Gastrocnemius medialis (tissue), 4 donors: ENCODE measurements at regions of chr2 and their contacts with region 1.

Region 1: GRCh38 chr2:98835831-98836385 is 100.1 kb downstream of the CRACDL start:
- DNase-seq: no peak
- ATAC-seq: no peak
- H3K4me3 ChIP-seq: no peak overlapping the region
- H3K27ac ChIP-seq: no peak overlapping the region
- H3K4me1 ChIP-seq: no peaks in the 10 kb centered on the region
- H3K27me3 ChIP-seq: no peaks in the 10 kb centered on the region
- CTCF ChIP-seq: no peak
- POLR2A ChIP-seq: no peak

Region 2: GRCh38 chr2:98253461-98254070 is 582.3 kb before region 1 on chr2:
- in situ Hi-C with region 1: no loop called
- intact Hi-C with region 1: no loop called
- DNase-seq: no peak
- ATAC-seq: no peak
- H3K4me3 ChIP-seq: no peak overlapping the region
- H3K27ac ChIP-seq: no peak overlapping the region
- H3K4me1 ChIP-seq: no peaks in the 10 kb centered on the region
- H3K27me3 ChIP-seq: no peaks in the 10 kb centered on the region
- CTCF ChIP-seq: no peak
- POLR2A ChIP-seq: no peak

Region 3: DNA sequence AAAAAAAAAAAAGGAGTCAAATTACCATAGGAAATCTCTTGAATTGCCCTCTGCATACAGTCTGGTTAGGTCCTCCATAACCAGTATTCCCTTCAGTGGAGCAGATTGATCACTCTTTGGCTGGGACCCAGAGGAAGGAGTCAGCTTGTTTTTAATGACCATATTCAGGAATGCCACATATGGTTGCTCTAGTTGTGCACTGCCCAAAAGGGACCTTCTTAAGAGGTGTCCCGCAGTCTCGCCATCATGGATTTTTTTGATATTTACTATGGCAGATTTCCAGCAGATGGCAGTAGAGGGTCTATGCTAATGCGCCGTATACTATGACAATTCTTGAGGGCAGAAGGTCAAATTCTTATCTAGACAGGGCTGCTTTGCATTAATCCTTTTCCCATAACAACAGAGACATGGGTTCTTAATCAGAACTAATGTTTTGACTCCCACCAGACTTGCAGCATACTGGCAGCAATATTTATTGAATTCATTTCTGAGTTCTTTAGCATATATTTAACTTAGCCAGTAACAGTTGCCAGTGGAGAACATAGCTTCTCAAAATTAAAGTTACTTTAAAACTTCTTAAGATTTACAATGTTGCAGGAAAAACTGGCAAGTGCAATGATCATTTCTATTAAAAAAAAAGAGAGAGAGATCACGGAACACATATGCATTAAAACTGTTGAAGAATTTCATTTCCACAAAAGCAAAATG is 423.0 kb before region 1 on chr2:
- in situ Hi-C with region 1: loop called in 2 of 4 experiments (anchors 25 kb)
- intact Hi-C with region 1: loop called (anchors 10 kb)
- DNase-seq: no peak
- ATAC-seq: peak; percentile 51 to 52
- H3K4me3 ChIP-seq: no peak overlapping the region
- H3K27ac ChIP-seq: no peak overlapping the region
- H3K4me1 ChIP-seq: no peaks in the 10 kb centered on the region
- H3K27me3 ChIP-seq: no peaks in the 10 kb centered on the region
- CTCF ChIP-seq: peak in 4 of 5 experiments; percentile 51 to 64 (median 60)
- POLR2A ChIP-seq: no peak

Region 4: DNA sequence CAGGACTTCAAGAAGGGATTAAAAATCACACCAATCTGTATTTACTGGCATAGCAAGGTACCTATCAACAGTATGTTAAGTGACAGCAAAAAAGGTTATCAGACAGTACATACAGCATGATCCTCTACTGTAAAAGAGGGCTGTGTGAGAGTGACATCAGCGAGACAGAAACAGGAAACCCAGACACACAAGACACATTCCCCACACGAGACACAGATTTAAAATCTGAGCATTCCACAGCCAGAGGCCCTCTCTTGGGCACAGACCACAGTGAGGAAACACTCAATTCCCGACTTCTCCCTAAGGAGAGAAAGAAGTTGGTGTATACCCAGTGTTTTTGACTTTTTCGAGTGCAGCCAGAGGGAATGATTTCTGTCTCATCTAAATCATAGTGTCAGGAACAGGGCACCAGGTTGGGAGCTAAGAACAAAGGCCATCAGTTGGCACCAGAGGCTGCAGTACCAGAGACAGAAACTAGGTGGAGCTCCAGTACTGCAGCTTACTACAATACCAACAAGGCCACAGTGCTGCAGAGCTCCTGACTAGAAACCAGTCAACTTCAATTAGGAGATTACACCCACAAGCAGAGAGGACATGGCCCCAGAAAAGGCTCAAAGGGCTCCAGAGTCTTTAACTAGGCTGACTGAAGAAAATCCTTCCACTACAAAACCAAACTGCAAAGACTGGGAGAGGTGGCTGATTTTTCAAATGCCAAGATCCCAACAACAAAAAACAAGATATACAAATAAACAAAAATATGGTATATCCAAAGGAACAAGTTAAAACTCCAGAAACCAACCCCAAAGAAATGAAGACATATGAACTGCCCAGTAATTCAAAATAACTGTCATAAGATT is 186.5 kb before region 1 on chr2:
- in situ Hi-C with region 1: loop called (anchors 5 kb)
- intact Hi-C with region 1: loop called (anchors 1 kb)
- DNase-seq: peak; percentile 39 to 69
- ATAC-seq: peak; percentile 93 to 94
- H3K4me3 ChIP-seq: no peak overlapping the region
- H3K27ac ChIP-seq: no peak overlapping the region
- H3K4me1 ChIP-seq: no peaks in the 10 kb centered on the region
- H3K27me3 ChIP-seq: no peaks in the 10 kb centered on the region
- CTCF ChIP-seq: peak; percentile 94 to 99 (median 96)
- POLR2A ChIP-seq: no peak

Region 5: GRCh38 chr2:98654699-98655495 is 181.0 kb before region 1 on chr2:
- in situ Hi-C with region 1: loop called in 2 of 4 experiments (anchors 5 kb)
- intact Hi-C with region 1: no loop called
- DNase-seq: peak in 1 of 2 donors; percentile 21
- ATAC-seq: no peak
- H3K4me3 ChIP-seq: no peak overlapping the region
- H3K27ac ChIP-seq: peak overlapping the region in 1 of 4 donors; percentile 12
- H3K4me1 ChIP-seq: no peaks in the 10 kb centered on the region
- H3K27me3 ChIP-seq: no peaks in the 10 kb centered on the region
- CTCF ChIP-seq: no peak
- POLR2A ChIP-seq: no peak

Region 6: GRCh38 chr2:98775146-98775986 is 60.5 kb before region 1 on chr2:
- in situ Hi-C with region 1: no loop called
- intact Hi-C with region 1: no loop called
- DNase-seq: no peak
- ATAC-seq: no peak
- H3K4me3 ChIP-seq: no peak overlapping the region
- H3K27ac ChIP-seq: no peak overlapping the region
- H3K4me1 ChIP-seq: no peaks in the 10 kb centered on the region
- H3K27me3 ChIP-seq: no peaks in the 10 kb centered on the region
- CTCF ChIP-seq: no peak
- POLR2A ChIP-seq: no peak

Region 7: GRCh38 chr2:99216096-99216495 is 380.2 kb after region 1 on chr2:
- in situ Hi-C with region 1: no loop called
- intact Hi-C with region 1: no loop called
- DNase-seq: no peak
- ATAC-seq: no peak
- H3K4me3 ChIP-seq: no peak overlapping the region
- H3K27ac ChIP-seq: no peak overlapping the region
- H3K4me1 ChIP-seq: no peaks in the 10 kb centered on the region
- H3K27me3 ChIP-seq: no peaks in the 10 kb centered on the region
- CTCF ChIP-seq: no peak
- POLR2A ChIP-seq: no peak